ENCODE measurements at regions of chr10 and their contacts with region 1.

Region 1: DNA sequence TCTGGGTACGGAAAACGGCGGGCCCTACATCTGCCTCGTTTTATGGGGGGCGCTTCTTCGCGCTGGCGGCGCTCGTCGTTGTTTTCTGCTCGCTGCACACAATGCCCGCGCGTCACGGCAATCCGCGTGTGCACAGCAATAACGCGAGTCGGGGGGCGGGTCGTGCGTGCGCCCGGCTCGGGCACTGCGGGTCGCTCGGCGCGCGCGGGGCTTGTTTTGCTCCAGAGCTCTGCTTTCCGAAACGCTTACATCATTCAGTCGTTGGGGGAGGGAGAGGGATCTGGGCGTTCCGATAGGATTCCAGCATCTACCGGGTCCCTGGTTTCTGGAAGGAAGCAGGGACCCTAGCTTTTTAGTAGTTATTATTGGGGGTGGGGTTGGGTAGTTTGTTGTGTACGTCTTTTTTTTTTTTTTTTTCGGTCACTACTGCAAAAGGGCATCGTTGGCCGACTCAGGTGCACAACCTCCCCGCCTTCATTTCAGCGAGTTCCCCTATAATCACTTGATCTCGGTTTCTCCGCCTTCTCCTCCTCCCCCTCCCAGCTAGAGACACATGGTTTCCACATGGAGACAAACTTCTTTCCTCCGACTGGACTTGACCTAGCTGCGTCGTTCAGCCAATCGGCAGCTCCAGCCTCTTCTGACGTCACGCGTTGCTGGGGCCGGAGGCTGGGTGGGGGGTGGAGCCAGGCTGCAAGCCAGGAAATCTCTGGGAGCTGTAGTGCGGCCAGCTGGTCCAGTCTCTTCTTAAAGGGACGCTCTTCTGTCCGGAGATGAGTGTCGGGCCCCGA is 3.5 kb downstream of the MXI1 start:
- DNase-seq: peak; percentile 98
- H3K4me3 Mint-ChIP-seq: peak overlapping the region; percentile 91
- H3K27ac Mint-ChIP-seq: peak overlapping the region; percentile 98
- H3K4me1 Mint-ChIP-seq: peaks cover 68% of the 10 kb centered on the region
- H3K27me3 Mint-ChIP-seq: peaks cover 8% of the 10 kb centered on the region

Region 2: DNA sequence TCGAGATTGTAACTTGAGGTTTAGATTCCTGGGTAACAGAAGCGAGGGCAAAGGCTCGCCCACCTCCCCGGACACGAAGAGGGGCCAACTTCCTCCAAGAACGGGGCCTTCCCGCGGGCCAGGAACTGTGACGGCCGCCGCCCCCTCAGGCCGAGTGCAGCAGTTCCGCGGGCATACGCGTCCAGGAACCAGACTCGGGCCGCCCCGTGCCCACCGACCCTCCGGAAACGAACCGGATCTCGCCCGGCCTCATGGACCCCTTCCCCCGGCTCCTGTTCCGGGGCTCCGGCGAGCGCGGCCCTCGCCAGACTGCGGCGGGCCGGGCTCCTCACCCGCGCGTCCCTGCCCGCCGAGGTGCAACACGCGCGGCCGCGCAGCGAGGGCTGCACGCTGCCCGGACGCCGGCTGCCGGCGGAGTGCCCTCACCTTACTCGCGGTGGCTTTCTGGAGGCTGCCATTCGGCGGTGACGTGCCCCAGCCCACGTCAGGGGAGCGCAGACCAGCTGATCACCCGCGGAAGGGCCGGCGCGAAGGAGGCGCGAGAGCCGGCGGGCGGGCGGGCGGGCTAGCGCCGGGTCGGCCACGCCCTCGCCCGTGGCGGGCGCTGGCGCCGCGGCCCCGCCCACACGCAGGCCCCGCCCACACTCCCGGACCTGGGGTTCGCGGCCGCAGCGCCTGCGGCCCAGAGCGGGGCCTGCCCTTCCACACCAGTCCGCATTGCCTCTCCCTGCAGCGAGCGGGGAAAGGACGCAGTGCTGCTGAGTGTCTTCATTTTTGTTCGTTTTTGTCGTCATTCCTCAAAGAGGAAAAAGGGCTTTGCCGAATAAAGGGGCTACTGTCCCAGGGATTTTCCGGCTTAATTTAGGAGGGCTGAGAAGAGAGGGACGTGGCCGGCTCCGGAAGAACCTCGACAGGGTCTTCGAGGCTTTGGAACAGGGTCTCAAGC is 287.6 kb before region 1 on chr10 and contains the start of gene XPNPEP1:
- intact Hi-C with region 1: loop called (anchors 2 kb)
- DNase-seq: peak; percentile 95
- H3K4me3 Mint-ChIP-seq: peak within 1 kb of the TSS; percentile 95
- H3K27ac Mint-ChIP-seq: peak within 1 kb of the TSS; percentile 93
- H3K4me1 Mint-ChIP-seq: peaks cover 49% of the 10 kb centered on the region
- H3K27me3 Mint-ChIP-seq: peaks cover 4% of the 10 kb centered on the region
- total RNA-seq, gene XPNPEP1: 98.9 and 105 TPM in 2 replicates

Region 3: DNA sequence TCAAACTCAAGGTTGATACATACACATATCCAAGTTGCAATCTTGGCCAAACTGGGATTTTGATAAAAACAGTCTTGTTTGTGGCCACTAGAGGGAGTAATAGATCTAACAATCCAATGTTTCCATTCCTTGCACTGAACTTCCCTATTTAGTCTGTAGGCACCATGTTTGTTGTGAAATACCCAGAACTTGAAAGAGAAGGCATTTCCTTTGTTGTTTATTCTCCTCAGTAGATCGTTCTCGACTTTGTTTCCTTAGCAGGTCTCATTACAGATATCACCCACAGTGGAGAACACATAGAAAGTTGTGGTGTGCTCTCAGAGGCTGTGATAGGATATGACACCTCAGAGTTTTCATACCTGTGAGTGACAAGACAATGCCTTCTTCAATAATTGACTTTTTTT is 73.7 kb before region 1 on chr10:
- intact Hi-C with region 1: loop called (anchors 1 kb)
- DNase-seq: peak; percentile 77
- H3K4me3 Mint-ChIP-seq: no peak overlapping the region
- H3K27ac Mint-ChIP-seq: peak overlapping the region; percentile 64
- H3K4me1 Mint-ChIP-seq: peaks cover 25% of the 10 kb centered on the region
- H3K27me3 Mint-ChIP-seq: no peaks in the 10 kb centered on the region

Region 4: GRCh38 chr10:110225756-110226542 is 15.1 kb after region 1 on chr10:
- intact Hi-C with region 1: loop called (anchors 1 kb)
- DNase-seq: peak; percentile 95
- H3K4me3 Mint-ChIP-seq: peak overlapping the region; percentile 99
- H3K27ac Mint-ChIP-seq: peak overlapping the region; percentile 99
- H3K4me1 Mint-ChIP-seq: peaks cover 45% of the 10 kb centered on the region
- H3K27me3 Mint-ChIP-seq: peaks cover 3% of the 10 kb centered on the region

Region 5: GRCh38 chr10:110414563-110415309 is 203.9 kb after region 1 on chr10:
- intact Hi-C with region 1: loop called (anchors 5 kb)
- DNase-seq: peak; percentile 95
- H3K4me3 Mint-ChIP-seq: peak overlapping the region; percentile 39
- H3K27ac Mint-ChIP-seq: peak overlapping the region; percentile 94
- H3K4me1 Mint-ChIP-seq: peaks cover 62% of the 10 kb centered on the region
- H3K27me3 Mint-ChIP-seq: no peaks in the 10 kb centered on the region

Region 6: GRCh38 chr10:110567201-110568054 is 356.6 kb after region 1 on chr10 and contains the start of gene SMC3:
- intact Hi-C with region 1: loop called (anchors 2 kb)
- DNase-seq: peak; percentile 98
- H3K4me3 Mint-ChIP-seq: peak within 1 kb of the TSS; percentile 97
- H3K27ac Mint-ChIP-seq: peak within 1 kb of the TSS; percentile 98
- H3K4me1 Mint-ChIP-seq: peaks cover 32% of the 10 kb centered on the region
- H3K27me3 Mint-ChIP-seq: peaks cover 21% of the 10 kb centered on the region
- total RNA-seq, gene SMC3: 82.2 and 87.3 TPM in 2 replicates